WTC11 (cell line): ENCODE measurements at regions of chr19 and their contacts with region 1.

Region 1: GRCh38 chr19:28217022-28217421 is 995.9 kb downstream of the UQCRFS1 start:
- DNase-seq: peak; percentile 50
- ATAC-seq: peak; percentile 92
- H3K4me3 Mint-ChIP-seq: no peak overlapping the region
- H3K27ac Mint-ChIP-seq: no peak overlapping the region
- H3K4me1 Mint-ChIP-seq: peaks cover 25% of the 10 kb centered on the region
- H3K27me3 Mint-ChIP-seq: no peaks in the 10 kb centered on the region; the same call in 1 of the 2 replicates
- CTCF ChIP-seq: peak; percentile 22; the same call in 1 of the 2 replicates

Region 2: DNA sequence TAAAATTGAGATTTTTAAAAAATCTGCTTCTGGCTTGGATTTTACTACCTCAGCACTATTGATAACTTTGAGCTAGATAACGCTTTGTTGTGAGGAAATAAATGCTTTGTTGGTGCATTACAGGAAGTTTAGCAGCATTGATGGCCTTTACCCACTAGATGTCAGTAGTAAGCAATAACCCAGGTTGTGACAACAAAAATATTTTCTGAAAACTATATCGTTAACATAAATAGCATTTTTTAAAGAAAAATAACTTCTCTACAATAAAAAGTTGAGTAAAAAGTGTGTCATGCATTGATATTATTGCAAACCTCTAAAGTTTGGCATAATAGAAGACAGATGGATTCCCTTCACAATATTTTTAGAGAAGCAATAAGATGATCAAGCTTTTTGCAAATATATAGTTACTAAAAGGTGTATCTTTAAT is 250.6 kb before region 1 on chr19:
- CTCF ChIA-PET with region 1: interaction called, 80 read pairs
- POLR2A ChIA-PET with region 1: no interaction called
- DNase-seq: no peak
- ATAC-seq: no peak
- H3K4me3 Mint-ChIP-seq: no peak overlapping the region
- H3K27ac Mint-ChIP-seq: no peak overlapping the region
- H3K4me1 Mint-ChIP-seq: peaks cover 7% of the 10 kb centered on the region
- H3K27me3 Mint-ChIP-seq: no peaks in the 10 kb centered on the region
- CTCF ChIP-seq: peak; percentile 28; the same call in 1 of the 2 replicates

Region 3: GRCh38 chr19:28009696-28010095 is 207.3 kb before region 1 on chr19:
- CTCF ChIA-PET with region 1: interaction called, 63 read pairs
- POLR2A ChIA-PET with region 1: no interaction called
- DNase-seq: no peak
- ATAC-seq: no peak
- H3K4me3 Mint-ChIP-seq: no peak overlapping the region
- H3K27ac Mint-ChIP-seq: no peak overlapping the region
- H3K4me1 Mint-ChIP-seq: peaks cover 11% of the 10 kb centered on the region
- H3K27me3 Mint-ChIP-seq: no peaks in the 10 kb centered on the region
- CTCF ChIP-seq: no peak

Region 4: GRCh38 chr19:28184997-28185396 is 32.0 kb before region 1 on chr19:
- CTCF ChIA-PET with region 1: interaction called, 10 read pairs
- POLR2A ChIA-PET with region 1: no interaction called
- DNase-seq: no peak
- ATAC-seq: no peak
- H3K4me3 Mint-ChIP-seq: no peak overlapping the region
- H3K27ac Mint-ChIP-seq: no peak overlapping the region
- H3K4me1 Mint-ChIP-seq: peaks cover 25% of the 10 kb centered on the region
- H3K27me3 Mint-ChIP-seq: no peaks in the 10 kb centered on the region; the same call in 1 of the 2 replicates
- CTCF ChIP-seq: no peak

Region 5: GRCh38 chr19:28313633-28314032 is 96.6 kb after region 1 on chr19:
- CTCF ChIA-PET with region 1: no interaction called
- POLR2A ChIA-PET with region 1: no interaction called
- DNase-seq: no peak
- ATAC-seq: no peak
- H3K4me3 Mint-ChIP-seq: no peak overlapping the region
- H3K27ac Mint-ChIP-seq: no peak overlapping the region
- H3K4me1 Mint-ChIP-seq: peaks cover 17% of the 10 kb centered on the region
- H3K27me3 Mint-ChIP-seq: peaks cover under 1% of the 10 kb centered on the region
- CTCF ChIP-seq: no peak

Region 6: DNA sequence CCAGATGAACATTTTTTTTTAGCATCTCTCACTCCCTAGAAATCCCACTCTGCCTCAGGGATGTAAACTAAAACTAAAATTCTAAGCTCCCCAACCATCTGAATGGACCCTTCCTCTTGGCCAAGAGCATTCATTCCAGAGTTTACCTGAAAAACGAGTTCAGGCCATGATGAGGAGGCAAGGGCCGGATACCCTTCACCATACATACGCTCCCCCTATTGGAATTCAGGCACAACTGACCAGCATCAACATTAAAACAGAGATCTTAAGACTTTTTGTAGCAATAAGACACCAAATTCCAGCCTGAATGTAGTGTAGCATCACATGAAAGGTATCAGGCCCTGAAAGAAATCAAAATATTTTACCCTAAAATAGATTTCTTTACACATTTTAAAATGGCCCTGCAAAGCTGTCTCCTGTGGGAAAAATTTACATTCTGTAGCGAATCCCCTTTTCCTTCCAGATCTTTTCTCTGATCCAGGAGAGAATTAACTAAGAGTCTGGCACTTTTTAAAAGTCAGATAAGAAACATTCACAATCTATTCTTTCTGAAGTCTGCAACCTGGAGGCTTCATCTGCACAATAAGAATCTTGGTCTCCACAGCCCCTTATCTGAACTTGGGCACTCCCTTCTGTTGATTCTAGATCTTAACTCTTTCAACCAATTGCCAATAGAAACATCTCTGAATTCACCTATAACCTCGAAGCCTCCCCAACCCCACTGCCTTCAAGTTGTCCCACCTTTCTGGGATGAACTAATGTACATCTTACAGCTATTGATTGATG is 107.4 kb after region 1 on chr19:
- CTCF ChIA-PET with region 1: interaction called, 22 read pairs
- POLR2A ChIA-PET with region 1: no interaction called
- DNase-seq: no peak
- ATAC-seq: peak; percentile 78
- H3K4me3 Mint-ChIP-seq: no peak overlapping the region
- H3K27ac Mint-ChIP-seq: no peak overlapping the region
- H3K4me1 Mint-ChIP-seq: peaks cover 33% of the 10 kb centered on the region
- H3K27me3 Mint-ChIP-seq: peaks cover 8% of the 10 kb centered on the region
- CTCF ChIP-seq: no peak

Region 7: DNA sequence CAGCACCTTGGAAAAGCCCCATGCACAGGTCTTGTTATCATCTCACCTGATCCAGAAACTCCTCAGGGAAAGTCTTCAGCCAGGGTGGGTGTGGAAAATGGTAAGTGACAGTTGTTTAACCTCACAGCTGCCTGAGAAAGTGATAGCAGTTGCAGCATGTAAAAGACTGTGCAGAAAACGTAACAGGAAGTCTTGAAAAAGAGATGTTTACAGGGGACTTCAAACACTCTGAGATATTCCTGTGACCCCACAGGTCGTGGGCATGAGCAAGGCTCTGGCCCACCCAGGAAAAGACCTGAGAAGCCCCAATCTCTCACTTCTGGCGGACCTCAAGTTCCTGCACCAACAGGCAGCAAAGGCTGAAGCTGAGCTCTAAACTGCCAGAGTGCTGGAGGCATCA is 169.0 kb after region 1 on chr19:
- CTCF ChIA-PET with region 1: no interaction called
- POLR2A ChIA-PET with region 1: no interaction called
- DNase-seq: no peak
- ATAC-seq: no peak
- H3K4me3 Mint-ChIP-seq: no peak overlapping the region
- H3K27ac Mint-ChIP-seq: no peak overlapping the region
- H3K4me1 Mint-ChIP-seq: peaks cover 5% of the 10 kb centered on the region; the same call in 1 of the 2 replicates
- H3K27me3 Mint-ChIP-seq: no peaks in the 10 kb centered on the region
- CTCF ChIP-seq: no peak